Body of pancreas (tissue), 4 donors: ENCODE measurements at regions of chrX and their contacts with region 1.

Region 1: GRCh38 chrX:44392767-44393166 is 49.3 kb upstream of the EFHC2 start:
- DNase-seq: no peak
- ATAC-seq: no peak
- H3K4me3 ChIP-seq: no peak overlapping the region
- H3K27ac ChIP-seq: no peak overlapping the region
- H3K4me1 ChIP-seq: no peaks in the 10 kb centered on the region
- H3K27me3 ChIP-seq: no peaks in the 10 kb centered on the region
- CTCF ChIP-seq: no peak
- POLR2A ChIP-seq: no peak

Region 2: GRCh38 chrX:44459501-44459900 is 66.7 kb after region 1 on chrX:
- intact Hi-C with region 1: loop called (anchors 10 kb)
- DNase-seq: no peak
- ATAC-seq: no peak
- H3K4me3 ChIP-seq: no peak overlapping the region
- H3K27ac ChIP-seq: no peak overlapping the region
- H3K4me1 ChIP-seq: no peaks in the 10 kb centered on the region
- H3K27me3 ChIP-seq: no peaks in the 10 kb centered on the region
- CTCF ChIP-seq: no peak
- POLR2A ChIP-seq: no peak

Region 3: GRCh38 chrX:44914532-44915198 is 521.9 kb after region 1 on chrX:
- intact Hi-C with region 1: no loop called
- DNase-seq: no peak
- ATAC-seq: no peak
- H3K4me3 ChIP-seq: no peak overlapping the region
- H3K27ac ChIP-seq: peak overlapping the region in 3 of 4 donors; percentile 30 to 44 (median 40)
- H3K4me1 ChIP-seq: peaks cover 20% of the 10 kb centered on the region
- H3K27me3 ChIP-seq: no peaks in the 10 kb centered on the region
- CTCF ChIP-seq: no peak
- POLR2A ChIP-seq: no peak